PC-3 (cell line): ENCODE measurements at regions of chr10 and their contacts with region 1.

Region 1: DNA sequence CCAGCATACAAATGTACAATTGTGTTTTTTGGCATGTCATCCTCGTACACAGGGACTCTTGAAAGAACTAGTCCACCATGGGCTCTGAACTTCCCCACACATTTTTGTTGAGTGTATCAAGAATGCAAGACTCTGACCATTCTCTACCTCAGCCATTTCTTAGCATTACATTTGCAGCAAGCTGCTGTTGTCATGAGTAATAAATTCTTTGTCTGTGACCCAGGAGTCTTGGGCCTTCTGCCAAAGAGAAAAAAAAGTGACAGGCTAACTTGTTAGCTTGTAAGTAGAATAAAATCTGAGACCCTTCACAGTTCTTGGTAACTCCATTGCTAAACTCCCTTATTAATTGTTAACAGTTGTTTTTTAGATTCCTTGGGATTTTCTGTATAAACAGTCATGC is 542.3 kb upstream of the MBL2 start:
- DNase-seq: peak; percentile 100
- ATAC-seq: peak; percentile 97
- H3K4me3 ChIP-seq: no peak overlapping the region
- H3K27ac ChIP-seq: no peak overlapping the region
- H3K4me1 ChIP-seq: peaks cover 14% of the 10 kb centered on the region
- H3K27me3 ChIP-seq: no peaks in the 10 kb centered on the region
- CTCF ChIP-seq: no peak

Region 2: DNA sequence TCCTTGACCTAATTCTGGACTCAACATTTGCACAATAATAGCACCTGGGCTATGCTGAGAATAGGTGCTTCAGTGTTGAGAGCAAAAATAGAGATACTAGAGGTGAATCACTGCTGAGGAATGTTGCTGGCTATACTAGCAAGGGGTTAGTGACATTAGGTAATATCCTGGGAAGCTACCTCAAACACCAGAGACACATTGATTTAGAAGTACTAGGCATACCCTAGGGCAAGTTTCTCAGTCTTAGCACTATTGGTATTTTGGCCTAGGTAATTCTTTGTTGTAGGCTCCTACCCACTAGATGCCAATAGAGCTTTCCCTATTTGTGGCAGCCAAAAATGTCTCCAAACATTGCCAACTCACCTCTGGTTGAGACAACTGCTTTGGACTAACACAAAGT is 58.3 kb before region 1 on chr10:
- CTCF ChIA-PET with region 1: no interaction called
- POLR2A ChIA-PET with region 1: no interaction called
- intact Hi-C with region 1: loop called (anchors 2 kb)
- DNase-seq: peak; percentile 100
- ATAC-seq: peak; percentile 98
- H3K4me3 ChIP-seq: no peak overlapping the region
- H3K27ac ChIP-seq: peak overlapping the region; percentile 8
- H3K4me1 ChIP-seq: peaks cover 20% of the 10 kb centered on the region
- H3K27me3 ChIP-seq: no peaks in the 10 kb centered on the region
- CTCF ChIP-seq: no peak

Region 3: DNA sequence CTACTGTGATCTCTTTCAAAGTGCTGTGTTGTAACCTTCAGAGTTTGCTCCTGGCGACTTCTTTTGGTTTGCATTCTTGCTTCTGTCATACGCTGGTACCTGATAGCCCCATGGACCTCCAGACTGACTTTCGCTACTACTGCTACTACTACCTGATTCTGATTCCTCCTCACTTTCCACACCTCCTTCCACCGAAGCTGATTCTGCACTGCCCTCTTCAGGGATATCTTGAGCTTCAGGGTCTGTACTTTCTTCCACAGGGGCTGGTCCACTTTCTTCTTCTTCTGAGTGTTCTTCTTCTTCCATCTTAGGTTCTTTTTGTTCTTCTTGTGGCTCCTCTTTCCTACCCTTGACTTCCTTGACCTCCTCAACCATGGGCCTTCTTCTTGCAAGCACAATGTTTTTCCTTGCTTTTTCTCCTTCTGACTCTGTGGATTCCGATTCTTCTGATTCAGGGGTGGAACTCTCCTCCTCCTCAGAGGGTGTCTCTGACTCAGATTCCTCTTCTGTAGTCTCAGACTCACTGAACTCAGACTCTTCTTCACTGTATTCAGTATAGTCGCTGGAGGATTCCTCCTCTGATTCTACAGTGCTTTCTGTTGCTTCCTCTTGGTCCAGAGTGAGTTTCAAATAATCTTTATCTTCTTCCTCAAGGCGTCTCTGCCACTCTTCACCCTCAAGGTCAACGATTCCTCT is 493.9 kb after region 1 on chr10:
- CTCF ChIA-PET with region 1: no interaction called
- POLR2A ChIA-PET with region 1: no interaction called
- intact Hi-C with region 1: loop called (anchors 2 kb)
- DNase-seq: peak; percentile 31
- ATAC-seq: peak; percentile 83
- H3K4me3 ChIP-seq: no peak overlapping the region
- H3K27ac ChIP-seq: no peak overlapping the region
- H3K4me1 ChIP-seq: no peaks in the 10 kb centered on the region
- H3K27me3 ChIP-seq: no peaks in the 10 kb centered on the region
- CTCF ChIP-seq: peak; percentile 46

Region 4: DNA sequence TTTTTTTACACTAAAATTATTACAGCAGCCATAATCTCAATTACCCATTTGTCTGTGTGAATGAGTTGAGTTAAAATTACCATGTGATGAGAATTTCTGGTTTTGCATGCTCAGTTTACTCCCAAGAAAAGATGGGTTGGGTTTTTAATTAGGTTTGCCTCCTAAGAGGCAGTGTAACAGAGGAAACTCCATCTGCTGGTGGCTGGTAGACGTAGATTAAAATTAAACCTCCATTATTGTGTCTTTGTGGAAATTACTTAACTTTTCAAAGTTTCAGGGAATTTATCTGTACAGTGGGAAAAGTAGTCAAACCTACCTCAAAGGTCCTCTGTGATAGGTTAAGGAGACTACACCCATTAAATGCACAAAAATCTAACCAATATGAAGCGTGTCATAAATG is 531.9 kb after region 1 on chr10:
- CTCF ChIA-PET with region 1: no interaction called
- POLR2A ChIA-PET with region 1: no interaction called
- intact Hi-C with region 1: loop called (anchors 5 kb)
- DNase-seq: peak; percentile 37
- ATAC-seq: peak; percentile 73
- H3K4me3 ChIP-seq: no peak overlapping the region
- H3K27ac ChIP-seq: no peak overlapping the region
- H3K4me1 ChIP-seq: 0 out of 2 replicates have a peak, but pooled peaks cover 4% of the 10 kb centered on the region
- H3K27me3 ChIP-seq: no peaks in the 10 kb centered on the region
- CTCF ChIP-seq: peak; percentile 72

Region 5: DNA sequence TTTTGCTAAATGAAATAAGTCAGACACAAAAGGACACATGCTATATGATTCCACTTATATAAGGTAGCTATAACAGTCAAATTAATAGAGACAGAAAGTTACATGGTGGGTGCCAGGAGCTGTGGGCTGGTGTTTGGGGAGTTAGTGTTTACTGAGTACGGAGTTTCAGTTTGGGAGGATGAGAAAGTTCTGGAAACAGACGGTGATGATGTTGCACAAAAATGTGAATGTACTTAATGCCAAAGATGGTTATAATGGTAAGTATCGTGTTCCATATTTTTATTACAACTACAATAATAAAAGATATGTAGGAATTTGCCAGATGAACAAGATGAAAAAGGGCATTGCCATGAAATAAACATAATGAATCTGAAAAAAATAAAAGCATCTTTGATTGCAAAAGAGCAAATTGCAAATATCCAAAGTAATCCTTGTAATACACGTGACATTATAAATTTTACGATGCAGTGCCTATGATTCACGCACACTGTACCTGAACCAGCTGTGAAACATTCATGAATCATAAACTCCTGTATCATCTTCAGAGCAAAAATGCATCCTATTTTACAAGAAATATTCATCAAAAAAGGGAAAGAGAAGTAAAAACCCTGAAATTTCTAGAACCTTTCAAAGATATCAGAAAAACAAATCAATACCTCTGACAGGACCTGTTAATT is 809.5 kb after region 1 on chr10:
- CTCF ChIA-PET with region 1: no interaction called
- POLR2A ChIA-PET with region 1: no interaction called
- intact Hi-C with region 1: loop called (anchors 5 kb)
- DNase-seq: peak; percentile 74
- ATAC-seq: peak; percentile 90
- H3K4me3 ChIP-seq: no peak overlapping the region
- H3K27ac ChIP-seq: peak overlapping the region; percentile 18
- H3K4me1 ChIP-seq: peaks cover 7% of the 10 kb centered on the region
- H3K27me3 ChIP-seq: no peaks in the 10 kb centered on the region
- CTCF ChIP-seq: no peak